ENCODE measurements at regions of chr10 and their contacts with region 1.

Region 1: DNA sequence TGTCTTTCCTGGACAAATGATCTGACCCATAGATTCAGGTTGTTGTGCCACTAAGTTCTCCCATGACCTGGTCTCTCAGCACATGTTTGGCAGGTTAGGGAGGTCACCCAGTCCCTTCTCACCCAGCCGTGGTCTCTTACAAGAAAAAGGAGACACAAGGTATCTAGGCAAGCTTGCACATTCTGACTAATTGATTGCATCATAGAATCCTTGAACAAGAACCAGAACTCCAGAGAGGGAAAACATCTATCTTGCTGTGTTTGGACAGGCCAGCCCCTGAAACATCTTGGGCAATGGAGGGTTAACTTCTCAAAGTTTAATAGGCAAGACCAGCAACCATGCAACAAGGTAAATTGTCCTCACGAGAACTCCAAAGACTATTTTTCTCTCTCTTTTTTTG is 8.5 kb upstream of the HK1 start:
- DNase-seq: peak; percentile 17
- ATAC-seq: no peak
- H3K4me3 ChIP-seq: no peak overlapping the region
- H3K27ac ChIP-seq: no peak overlapping the region
- H3K4me1 ChIP-seq: no peaks in the 10 kb centered on the region
- H3K27me3 ChIP-seq: peaks cover 30% of the 10 kb centered on the region
- CTCF ChIP-seq: no peak
- POLR2A ChIP-seq: no peak
- RAD21 ChIP-seq: no peak

Region 2: GRCh38 chr10:68813559-68813958 is 456.2 kb before region 1 on chr10:
- CTCF ChIA-PET with region 1: no interaction called
- POLR2A ChIA-PET with region 1: no interaction called
- dilution Hi-C with region 1: no loop called
- in situ Hi-C with region 1: no loop called
- intact Hi-C with region 1: no loop called
- DNase-seq: no peak
- ATAC-seq: no peak
- H3K4me3 ChIP-seq: no peak overlapping the region
- H3K27ac ChIP-seq: no peak overlapping the region
- H3K4me1 ChIP-seq: peaks cover 2% of the 10 kb centered on the region; the same call in 1 of the 2 replicates
- H3K27me3 ChIP-seq: peaks cover 3% of the 10 kb centered on the region
- CTCF ChIP-seq: no peak
- POLR2A ChIP-seq: no peak
- RAD21 ChIP-seq: no peak

Region 3: DNA sequence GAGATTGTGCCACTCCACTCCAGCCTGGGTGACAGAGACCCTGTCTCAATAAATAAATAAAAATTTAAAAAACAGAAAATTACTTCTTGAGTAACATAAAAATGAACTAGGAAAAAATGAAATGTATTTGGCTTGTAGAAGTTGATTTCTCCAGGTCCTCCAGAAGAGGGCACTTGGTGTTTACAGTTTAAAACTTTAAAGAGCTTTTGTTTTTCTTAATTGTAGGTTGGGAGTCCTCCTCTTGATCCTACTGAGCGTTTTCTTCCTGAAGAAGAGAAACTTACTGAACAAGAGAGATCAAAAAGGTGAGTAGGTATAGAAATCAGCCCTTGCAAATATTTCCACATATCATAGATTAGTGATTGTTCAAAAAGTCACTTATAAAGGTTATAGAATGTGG is 264.9 kb before region 1 on chr10:
- CTCF ChIA-PET with region 1: no interaction called
- POLR2A ChIA-PET with region 1: no interaction called
- dilution Hi-C with region 1: no loop called
- in situ Hi-C with region 1: no loop called
- intact Hi-C with region 1: no loop called
- DNase-seq: peak; percentile 73
- ATAC-seq: peak; percentile 81
- H3K4me3 ChIP-seq: no peak overlapping the region
- H3K27ac ChIP-seq: no peak overlapping the region
- H3K4me1 ChIP-seq: 0 out of 2 replicates have a peak, but pooled peaks cover 2% of the 10 kb centered on the region
- H3K27me3 ChIP-seq: no peaks in the 10 kb centered on the region
- CTCF ChIP-seq: peak; percentile 81
- POLR2A ChIP-seq: no peak
- RAD21 ChIP-seq: peak; percentile 80

Region 4: DNA sequence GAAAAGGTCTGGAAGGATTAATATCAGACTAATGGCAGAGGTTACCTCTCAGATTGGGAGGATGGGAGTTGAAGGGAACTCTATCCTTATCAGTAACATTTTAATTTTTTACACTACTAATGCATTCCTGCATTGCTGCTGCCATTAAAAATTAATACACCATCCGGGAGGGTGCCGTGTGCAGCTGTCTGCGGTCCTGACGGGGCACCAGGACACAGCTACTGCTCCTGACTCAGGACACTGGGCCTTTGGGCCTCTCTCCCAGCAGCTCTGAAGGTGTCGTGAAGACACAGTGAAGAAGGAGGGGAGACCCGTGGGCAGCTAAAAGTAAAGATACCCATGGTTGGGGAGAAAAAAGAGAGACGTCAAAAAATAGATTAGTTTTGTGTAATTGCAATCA is 14.9 kb before region 1 on chr10:
- CTCF ChIA-PET with region 1: no interaction called
- POLR2A ChIA-PET with region 1: no interaction called
- dilution Hi-C with region 1: no loop called
- in situ Hi-C with region 1: no loop called
- intact Hi-C with region 1: loop called (anchors 1 kb)
- DNase-seq: no peak
- ATAC-seq: no peak
- H3K4me3 ChIP-seq: no peak overlapping the region
- H3K27ac ChIP-seq: no peak overlapping the region
- H3K4me1 ChIP-seq: no peaks in the 10 kb centered on the region
- H3K27me3 ChIP-seq: peaks cover 31% of the 10 kb centered on the region
- CTCF ChIP-seq: no peak
- POLR2A ChIP-seq: no peak
- RAD21 ChIP-seq: no peak

Region 5: GRCh38 chr10:69306421-69306820 is 36.7 kb after region 1 on chr10:
- CTCF ChIA-PET with region 1: interaction called, 3 read pairs
- POLR2A ChIA-PET with region 1: no interaction called
- dilution Hi-C with region 1: no loop called
- in situ Hi-C with region 1: no loop called
- intact Hi-C with region 1: loop called (anchors 5 kb)
- DNase-seq: no peak
- ATAC-seq: no peak
- H3K4me3 ChIP-seq: no peak overlapping the region
- H3K27ac ChIP-seq: no peak overlapping the region
- H3K4me1 ChIP-seq: no peaks in the 10 kb centered on the region
- H3K27me3 ChIP-seq: peaks cover 14% of the 10 kb centered on the region
- CTCF ChIP-seq: no peak
- POLR2A ChIP-seq: no peak
- RAD21 ChIP-seq: no peak

Measured in IMR-90 (cell line).